Panc1 (cell line): ENCODE measurements at regions of chr1 and their contacts with region 1.

Region 1: DNA sequence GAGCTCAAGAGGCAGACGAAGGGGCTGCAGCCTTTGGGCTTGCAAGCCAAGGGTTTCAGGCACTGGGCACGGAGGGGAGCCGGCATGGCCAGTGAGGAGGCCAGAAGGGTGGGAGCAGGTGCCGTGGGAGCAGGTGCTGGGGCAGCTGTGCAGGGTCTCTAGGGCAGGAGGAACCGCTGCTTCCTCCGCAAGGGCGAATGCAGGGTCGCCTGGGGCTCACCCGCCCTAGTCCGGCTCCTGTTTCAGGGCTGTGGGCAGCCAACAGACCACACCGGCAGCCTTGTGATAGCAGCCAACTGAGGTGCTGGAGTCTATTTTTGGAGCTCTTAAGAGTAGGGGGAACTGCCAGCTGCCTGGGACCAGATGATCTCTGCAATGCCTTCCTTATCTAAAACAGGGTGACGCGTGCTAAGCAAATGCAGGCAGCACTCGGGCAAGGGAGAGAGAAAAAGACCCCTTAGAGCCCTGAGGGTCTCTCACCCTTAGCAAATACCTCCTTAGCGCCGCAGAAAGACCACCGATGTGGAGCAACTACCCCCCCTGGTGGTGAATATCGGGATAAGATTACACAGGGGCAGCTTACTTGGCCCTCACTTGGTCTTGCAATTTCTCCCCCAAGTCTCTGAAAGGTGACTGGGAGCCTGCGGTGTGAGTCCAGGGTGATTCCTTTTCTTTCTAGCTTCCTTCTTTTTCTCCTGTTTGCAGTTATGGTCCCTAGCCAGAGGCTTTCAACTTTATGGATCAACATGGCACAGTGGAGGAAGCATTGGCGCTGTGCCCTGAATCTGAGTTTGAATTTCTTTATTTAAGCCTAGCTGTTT is 20.7 kb upstream of the MAPKAPK2 start:
- DNase-seq: peak; percentile 54
- ATAC-seq: peak; percentile 86
- H3K4me3 ChIP-seq: no peak overlapping the region
- H3K27ac ChIP-seq: no peak overlapping the region
- H3K4me1 ChIP-seq: no peaks in the 10 kb centered on the region
- H3K27me3 ChIP-seq: peaks cover 11% of the 10 kb centered on the region; the same call in 1 of the 2 replicates
- CTCF ChIP-seq: peak; percentile 90

Region 2: GRCh38 chr1:206606856-206607255 is 57.2 kb before region 1 on chr1:
- CTCF ChIA-PET with region 1: interaction called, 8 read pairs
- POLR2A ChIA-PET with region 1: no interaction called
- in situ Hi-C with region 1: no loop called
- intact Hi-C with region 1: loop called (anchors 2 kb)
- DNase-seq: no peak
- ATAC-seq: peak; percentile 75
- H3K4me3 ChIP-seq: no peak overlapping the region
- H3K27ac ChIP-seq: no peak overlapping the region
- H3K4me1 ChIP-seq: 0 out of 2 replicates have a peak, but pooled peaks cover 5% of the 10 kb centered on the region
- H3K27me3 ChIP-seq: no peaks in the 10 kb centered on the region
- CTCF ChIP-seq: peak; percentile 66; the same call in 1 of the 2 replicates

Region 3: DNA sequence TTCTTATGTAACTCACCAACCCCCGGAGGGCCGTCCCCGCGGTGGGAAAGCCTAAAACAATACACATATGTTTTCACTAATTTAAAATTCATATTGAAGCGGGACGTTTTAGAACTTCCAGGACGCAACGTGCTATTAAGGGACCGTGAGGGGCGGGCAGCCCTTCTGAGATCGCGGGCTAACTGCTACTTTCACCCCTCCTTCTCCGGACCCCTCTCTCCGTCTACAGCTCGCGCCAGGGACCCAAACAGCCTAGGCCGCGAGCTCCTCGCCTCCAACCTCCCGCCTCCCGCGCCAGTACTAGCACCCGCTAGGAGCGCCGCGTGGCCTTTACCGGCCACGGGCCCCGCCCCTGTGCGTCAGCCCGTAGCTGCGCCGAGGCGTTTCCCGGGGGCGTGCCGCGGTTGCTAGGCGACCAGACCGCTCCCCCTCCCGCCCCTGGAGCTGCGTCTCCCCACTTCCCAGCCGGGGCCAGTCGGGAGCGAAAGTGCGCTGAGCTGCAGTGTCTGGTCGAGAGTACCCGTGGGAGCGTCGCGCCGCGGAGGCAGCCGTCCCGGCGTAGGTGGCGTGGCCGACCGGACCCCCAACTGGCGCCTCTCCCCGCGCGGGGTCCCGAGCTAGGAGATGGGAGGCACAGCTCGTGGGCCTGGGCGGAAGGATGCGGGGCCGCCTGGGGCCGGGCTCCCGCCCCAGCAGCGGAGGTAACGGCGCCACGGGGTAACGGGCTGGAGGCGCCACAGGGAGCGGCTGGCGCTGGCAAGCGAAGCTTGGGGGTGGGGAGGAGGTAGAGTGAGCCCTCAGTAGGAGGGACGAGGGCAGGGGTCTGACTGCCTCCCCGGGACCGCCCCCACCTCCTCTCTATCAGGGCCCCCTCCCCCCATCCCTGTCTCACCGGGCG is 28.7 kb before region 1 on chr1 and contains the start of gene DYRK3:
- CTCF ChIA-PET with region 1: interaction called, 32 read pairs
- POLR2A ChIA-PET with region 1: interaction called, 10 read pairs
- in situ Hi-C with region 1: no loop called
- intact Hi-C with region 1: loop called (anchors 1 kb)
- DNase-seq: peak; percentile 50
- ATAC-seq: peak; percentile 97
- H3K4me3 ChIP-seq: peak within 1 kb of the TSS; percentile 91 to 93
- H3K27ac ChIP-seq: peak within 1 kb of the TSS; percentile 88
- H3K4me1 ChIP-seq: peaks cover 15% of the 10 kb centered on the region
- H3K27me3 ChIP-seq: no peaks in the 10 kb centered on the region
- CTCF ChIP-seq: no peak
- total RNA-seq, gene DYRK3: 12.0 TPM

Region 4: DNA sequence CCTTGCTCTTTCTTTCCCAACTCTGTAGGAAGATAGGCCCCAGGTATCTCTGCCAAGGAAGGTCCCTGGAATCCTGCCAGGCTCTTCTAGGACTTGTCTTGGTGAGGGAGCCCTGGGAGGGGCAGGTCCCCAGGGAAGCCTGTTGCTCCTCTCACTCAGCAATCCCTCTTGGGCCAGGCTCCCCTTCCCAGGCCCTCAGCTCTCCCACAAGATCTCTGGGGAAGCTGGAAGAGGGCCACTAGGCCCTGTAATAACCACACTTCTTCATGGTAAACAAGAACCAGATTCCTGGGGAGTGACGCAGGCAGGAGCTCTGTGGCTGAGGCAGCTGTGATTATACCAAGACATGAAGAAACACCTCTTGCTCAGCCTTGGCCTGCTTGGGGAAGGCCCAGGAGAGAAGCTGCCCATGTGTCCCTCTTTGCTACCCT is 10.7 kb after region 1 on chr1:
- CTCF ChIA-PET with region 1: interaction called, 12 read pairs
- POLR2A ChIA-PET with region 1: no interaction called
- in situ Hi-C with region 1: no loop called
- intact Hi-C with region 1: no loop called
- DNase-seq: peak; percentile 62
- ATAC-seq: peak; percentile 96
- H3K4me3 ChIP-seq: no peak overlapping the region
- H3K27ac ChIP-seq: 0 out of 2 replicates have a peak overlapping the region, but pooled peaks have one; percentile 8
- H3K4me1 ChIP-seq: peaks cover 6% of the 10 kb centered on the region
- H3K27me3 ChIP-seq: peaks cover 2% of the 10 kb centered on the region; the same call in 1 of the 2 replicates
- CTCF ChIP-seq: no peak

Region 5: DNA sequence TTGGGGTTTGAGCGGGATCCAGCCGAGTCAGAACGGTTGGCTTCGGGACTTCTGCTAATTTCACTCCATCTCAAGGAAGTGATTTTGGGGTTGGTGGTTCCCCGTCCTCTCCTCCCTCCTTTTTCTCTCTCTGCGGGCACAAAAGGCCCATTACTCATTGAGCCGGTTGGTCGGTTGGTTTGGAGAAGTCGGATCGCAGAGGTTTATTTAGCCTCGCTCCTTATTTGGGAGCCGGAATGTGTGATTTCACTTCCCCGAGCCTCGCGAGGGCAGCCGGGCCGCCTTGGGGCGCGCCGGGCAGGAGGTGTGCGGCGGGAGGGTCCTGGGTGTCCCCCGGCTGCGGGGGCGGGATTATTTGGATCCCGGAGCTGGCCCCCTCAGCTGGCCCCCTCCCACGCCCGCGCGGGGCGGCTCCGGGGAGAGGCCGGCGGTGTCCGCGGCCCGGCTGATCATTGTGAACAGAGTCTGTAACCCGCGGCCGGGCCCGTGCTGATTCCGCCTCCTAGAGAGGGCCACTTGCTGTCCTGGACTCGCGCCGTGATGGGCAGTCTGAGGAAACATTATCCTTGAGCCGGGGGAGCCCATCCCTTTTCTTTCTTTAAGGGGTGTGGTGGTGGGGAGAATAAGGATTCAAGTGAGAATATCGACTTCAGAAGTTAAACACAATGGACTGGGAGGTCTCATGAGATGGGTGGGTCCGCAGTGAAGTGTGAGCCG is 21.9 kb after region 1 on chr1:
- CTCF ChIA-PET with region 1: no interaction called
- POLR2A ChIA-PET with region 1: no interaction called
- in situ Hi-C with region 1: no loop called
- intact Hi-C with region 1: no loop called
- DNase-seq: no peak
- ATAC-seq: peak; percentile 71
- H3K4me3 ChIP-seq: peak overlapping the region; percentile 84 to 87
- H3K27ac ChIP-seq: peak overlapping the region; percentile 86
- H3K4me1 ChIP-seq: peaks cover 31% of the 10 kb centered on the region
- H3K27me3 ChIP-seq: peaks cover 13% of the 10 kb centered on the region
- CTCF ChIP-seq: no peak

Region 6: DNA sequence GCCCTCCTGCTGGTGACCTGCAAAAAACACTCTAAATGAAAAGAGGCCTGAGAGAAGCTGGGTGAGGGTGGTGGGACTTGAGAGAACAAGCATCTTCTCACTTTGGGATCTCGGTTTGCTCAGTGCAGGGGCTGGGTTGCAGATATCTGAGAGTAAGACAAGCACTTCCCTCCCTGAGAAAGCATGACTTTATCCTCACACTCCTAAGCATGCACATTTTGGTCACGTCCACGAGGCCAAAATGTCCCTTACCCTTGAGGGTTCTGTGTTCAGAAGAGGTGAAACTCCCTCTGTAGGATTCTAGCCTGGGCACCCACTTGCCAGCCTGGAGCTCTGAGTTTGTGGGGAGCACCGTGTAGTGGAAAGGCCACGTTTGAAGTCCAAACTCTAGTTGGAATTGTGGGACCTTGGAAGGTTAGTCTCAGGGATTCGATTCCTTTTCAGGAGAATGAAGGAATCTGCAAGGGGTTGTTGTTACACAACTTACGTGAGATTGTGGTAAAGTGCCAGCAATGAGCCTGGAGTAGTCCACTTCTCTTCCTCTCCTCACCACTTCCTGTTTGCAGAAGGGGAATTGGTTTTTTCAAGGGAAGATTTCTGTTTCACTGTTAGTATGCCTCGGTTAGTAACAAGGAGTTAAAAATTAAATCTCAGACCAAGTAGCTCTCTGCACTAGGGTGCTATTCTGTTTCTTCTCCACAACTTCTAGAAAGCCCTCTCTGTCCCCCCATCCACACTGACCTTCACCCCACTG is 303.2 kb after region 1 on chr1:
- CTCF ChIA-PET with region 1: no interaction called
- POLR2A ChIA-PET with region 1: no interaction called
- in situ Hi-C with region 1: no loop called
- intact Hi-C with region 1: no loop called
- DNase-seq: no peak
- ATAC-seq: no peak
- H3K4me3 ChIP-seq: no peak overlapping the region
- H3K27ac ChIP-seq: no peak overlapping the region
- H3K4me1 ChIP-seq: no peaks in the 10 kb centered on the region
- H3K27me3 ChIP-seq: peaks cover 13% of the 10 kb centered on the region
- CTCF ChIP-seq: no peak